ENCODE measurements at regions of chr7 and their contacts with region 1.

Region 1: GRCh38 chr7:76314042-76314721 is 11.7 kb downstream of the HSPB1 start:
- DNase-seq: peak; percentile 98
- H3K4me3 Mint-ChIP-seq: peak overlapping the region; percentile 68
- H3K27ac Mint-ChIP-seq: peak overlapping the region; percentile 85
- H3K4me1 Mint-ChIP-seq: peaks cover 20% of the 10 kb centered on the region
- H3K27me3 Mint-ChIP-seq: no peaks in the 10 kb centered on the region

Region 2: DNA sequence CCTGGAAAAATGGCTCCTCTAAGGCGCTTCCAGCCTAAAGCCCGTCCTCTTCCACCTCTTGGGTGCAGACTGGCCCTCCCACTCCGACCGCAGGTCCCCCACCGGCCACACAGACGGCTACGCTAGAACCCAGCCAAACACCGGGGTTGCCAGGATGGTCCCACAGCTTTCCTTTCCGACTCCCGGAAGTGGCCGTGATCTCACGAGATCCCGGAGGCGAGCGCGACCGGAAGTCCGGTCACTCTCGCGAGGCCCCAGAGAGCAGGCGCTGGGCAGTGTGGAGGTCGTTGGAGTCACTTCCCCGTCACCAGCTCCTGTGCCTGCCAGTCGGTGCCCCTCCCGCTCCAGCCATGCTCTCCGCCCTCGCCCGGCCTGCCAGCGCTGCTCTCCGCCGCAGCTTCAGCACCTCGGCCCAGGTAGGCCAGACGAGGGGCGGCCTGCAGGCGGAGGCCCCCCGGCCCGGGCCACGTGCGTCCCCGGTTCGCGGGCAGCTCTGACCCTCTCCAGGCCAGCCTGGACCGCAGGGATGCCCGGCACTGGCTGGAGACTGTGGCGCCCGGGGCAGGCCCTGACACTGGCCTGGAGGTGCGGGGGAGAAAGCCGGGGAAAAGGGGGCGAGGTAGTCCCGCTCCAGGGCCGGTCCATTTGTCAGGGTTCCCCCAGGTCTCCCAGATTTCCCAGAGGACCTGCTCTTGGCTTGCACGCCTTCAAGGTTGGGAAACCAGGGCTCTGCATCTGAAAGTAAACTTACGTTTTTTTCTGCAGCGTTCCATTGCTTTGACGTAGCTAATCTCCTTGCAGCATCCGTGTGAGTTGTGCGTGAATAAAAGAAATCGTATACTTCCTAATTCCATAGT is 266.1 kb before region 1 on chr7 and contains the starts of genes MDH2 and STYXL1:
- intact Hi-C with region 1: loop called (anchors 5 kb)
- DNase-seq: peak; percentile 98
- H3K4me3 Mint-ChIP-seq: peak within 1 kb of the TSS; percentile 97
- H3K27ac Mint-ChIP-seq: peak within 1 kb of the TSS; percentile 96
- H3K4me1 Mint-ChIP-seq: peaks cover 39% of the 10 kb centered on the region
- H3K27me3 Mint-ChIP-seq: no peaks in the 10 kb centered on the region
- total RNA-seq, gene MDH2: 291 and 293 TPM in 2 replicates
- total RNA-seq, gene STYXL1: 30.9 and 33.6 TPM in 2 replicates

Region 3: GRCh38 chr7:76234931-76235441 is 79.2 kb before region 1 on chr7:
- intact Hi-C with region 1: loop called (anchors 1 kb)
- DNase-seq: peak; percentile 94
- H3K4me3 Mint-ChIP-seq: peak overlapping the region; percentile 64
- H3K27ac Mint-ChIP-seq: no peak overlapping the region
- H3K4me1 Mint-ChIP-seq: peaks cover 8% of the 10 kb centered on the region
- H3K27me3 Mint-ChIP-seq: peaks cover 41% of the 10 kb centered on the region

Region 4: DNA sequence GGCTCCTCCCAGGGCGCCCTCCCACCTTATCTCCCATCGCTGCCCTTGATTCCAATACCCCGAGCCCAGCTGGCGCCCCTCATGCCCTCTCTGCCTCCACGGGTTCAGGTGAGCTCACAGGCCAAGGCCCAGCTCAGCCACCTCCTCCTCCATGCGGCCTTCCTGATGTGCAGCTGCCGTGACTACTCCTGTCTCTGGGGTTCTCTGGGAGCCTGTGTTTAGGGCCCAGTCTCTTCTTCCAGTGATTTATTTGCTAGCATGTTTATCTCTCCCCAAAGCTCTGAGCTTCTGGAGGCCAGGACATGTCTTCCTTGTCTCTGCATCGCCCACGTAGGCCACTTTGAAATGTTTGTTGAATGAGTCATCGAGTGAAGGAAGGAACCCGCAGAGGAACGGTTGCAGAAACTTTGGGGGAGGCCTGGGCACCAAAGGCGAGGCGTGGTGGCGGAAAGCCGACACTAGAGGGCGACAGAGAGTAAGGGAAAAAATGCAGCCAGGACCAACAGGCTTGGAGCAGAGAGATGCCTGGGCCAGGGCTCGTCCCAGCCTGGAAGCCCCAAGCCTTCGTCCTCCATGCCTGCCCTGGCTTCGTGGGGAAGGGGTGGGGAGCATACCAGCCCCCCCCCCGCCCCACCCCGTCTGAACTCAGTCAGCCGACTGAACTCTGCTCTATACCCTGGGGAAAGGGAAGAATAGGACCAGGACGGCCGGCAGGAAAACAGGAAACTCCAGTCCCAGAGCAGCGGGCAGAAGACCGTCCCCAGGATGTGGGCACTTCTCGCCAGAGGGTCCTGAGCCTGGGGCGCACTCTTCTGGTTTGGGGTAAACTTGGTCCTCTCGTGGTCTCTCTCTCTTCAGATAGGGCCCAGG is 22.6 kb before region 1 on chr7:
- intact Hi-C with region 1: loop called (anchors 1 kb)
- DNase-seq: peak; percentile 97
- H3K4me3 Mint-ChIP-seq: peak overlapping the region; percentile 33
- H3K27ac Mint-ChIP-seq: peak overlapping the region; percentile 77
- H3K4me1 Mint-ChIP-seq: peaks cover 16% of the 10 kb centered on the region
- H3K27me3 Mint-ChIP-seq: no peaks in the 10 kb centered on the region

Region 5: DNA sequence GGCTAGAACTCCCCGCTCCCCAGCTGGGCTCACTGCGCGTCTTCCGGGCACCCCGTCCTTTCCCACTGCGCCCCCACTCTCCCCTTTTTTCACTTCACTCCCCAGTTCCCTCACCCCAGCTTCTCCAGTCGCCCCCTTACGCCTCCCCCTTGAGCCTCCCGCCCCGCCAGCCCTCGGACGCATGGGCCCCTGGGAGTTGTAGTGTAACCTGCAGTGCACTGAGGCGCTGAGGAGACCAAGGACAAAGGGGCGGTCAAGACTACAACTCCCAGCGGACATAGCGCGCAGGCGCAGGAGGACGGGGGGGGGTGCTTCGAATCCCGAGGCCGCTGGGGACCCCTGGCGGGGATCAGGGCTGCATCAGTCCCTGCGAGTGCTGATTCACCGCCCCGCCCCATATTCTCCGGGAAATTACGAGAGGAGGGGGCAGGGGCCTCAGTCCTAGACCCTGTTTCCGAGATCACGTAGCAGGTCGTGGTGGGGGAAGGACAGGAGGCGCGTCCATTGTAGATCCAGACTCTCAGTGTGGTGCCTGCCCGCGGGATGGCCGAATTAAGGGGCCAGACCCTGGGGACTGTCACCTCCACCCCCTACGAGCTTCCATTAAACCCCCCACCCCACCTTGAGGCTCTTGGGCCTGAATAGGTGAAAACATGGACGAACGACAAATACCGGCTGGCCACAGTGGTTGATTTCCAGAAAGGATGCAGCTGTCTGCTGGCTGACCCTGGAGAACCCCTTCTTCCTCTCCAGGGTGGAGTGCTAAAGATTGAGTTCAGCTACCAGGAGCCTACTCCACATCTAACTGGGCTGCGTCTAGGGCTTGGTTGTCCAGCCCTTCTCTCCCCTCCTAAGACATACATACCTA is 45.2 kb after region 1 on chr7:
- intact Hi-C with region 1: loop called (anchors 1 kb)
- DNase-seq: peak; percentile 98
- H3K4me3 Mint-ChIP-seq: peak overlapping the region; percentile 95
- H3K27ac Mint-ChIP-seq: peak overlapping the region; percentile 98
- H3K4me1 Mint-ChIP-seq: peaks cover 40% of the 10 kb centered on the region
- H3K27me3 Mint-ChIP-seq: no peaks in the 10 kb centered on the region

Measured in activated CD4-positive, alpha-beta T cell treated with anti-CD3 and anti-CD28 coated beads, Interleukin-2, amount 10 ng/mL, durations not matched to agents 24 days and 14 days (primary cell).